Left cardiac atrium (tissue), 4 donors: ENCODE measurements at regions of chr1 and their contacts with region 1.

Region 1: DNA sequence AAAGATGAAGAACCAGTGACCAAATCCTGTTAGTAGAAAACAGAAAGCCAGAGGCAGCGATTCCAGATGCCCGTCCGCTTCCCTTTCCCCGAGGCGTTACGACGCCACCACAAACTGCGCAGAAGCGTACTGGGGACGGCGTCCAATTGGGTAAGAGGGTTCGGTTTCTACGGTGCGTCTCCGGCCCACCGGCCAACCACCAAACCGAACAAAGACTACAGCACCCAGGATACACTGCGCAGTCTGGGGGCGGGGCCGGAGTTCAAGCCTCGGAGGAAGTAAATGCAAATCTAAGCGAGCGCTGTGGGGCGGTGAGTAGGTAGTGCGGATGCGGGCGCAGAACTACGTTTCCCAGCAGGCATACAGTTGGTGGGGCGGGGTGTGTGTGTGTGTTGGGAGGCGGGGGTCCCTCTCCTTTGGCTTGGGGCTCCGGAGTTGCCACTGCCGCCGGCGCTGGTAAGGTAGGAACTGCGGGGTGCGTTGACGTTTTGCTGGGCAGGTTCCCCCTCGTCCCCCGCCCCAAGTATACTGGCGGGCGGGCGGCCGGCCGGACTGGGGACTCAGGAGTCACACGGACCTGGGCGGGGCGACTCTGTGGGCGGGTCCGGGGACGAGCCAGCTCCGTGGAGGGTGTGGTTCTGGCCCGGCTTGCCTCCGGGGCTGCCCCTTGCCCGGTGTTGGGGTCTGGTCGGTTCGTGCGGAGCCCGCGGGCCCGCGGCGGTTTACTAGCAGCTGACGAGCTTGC is at the starts of genes SWT1 and TRMT1L:
- DNase-seq: peak; percentile 100
- ATAC-seq: peak; percentile 95 to 98
- total RNA-seq, gene SWT1: 4.9 to 5.6 TPM
- total RNA-seq, gene TRMT1L: 16.6 to 23.9 TPM

Region 2: GRCh38 chr1:184805667-184806295 is 351.2 kb before region 1 on chr1:
- intact Hi-C with region 1: loop called in 1 of 2 experiments (anchors 10 kb)
- DNase-seq: peak; percentile 89
- ATAC-seq: peak; percentile 95 to 96

Region 3: DNA sequence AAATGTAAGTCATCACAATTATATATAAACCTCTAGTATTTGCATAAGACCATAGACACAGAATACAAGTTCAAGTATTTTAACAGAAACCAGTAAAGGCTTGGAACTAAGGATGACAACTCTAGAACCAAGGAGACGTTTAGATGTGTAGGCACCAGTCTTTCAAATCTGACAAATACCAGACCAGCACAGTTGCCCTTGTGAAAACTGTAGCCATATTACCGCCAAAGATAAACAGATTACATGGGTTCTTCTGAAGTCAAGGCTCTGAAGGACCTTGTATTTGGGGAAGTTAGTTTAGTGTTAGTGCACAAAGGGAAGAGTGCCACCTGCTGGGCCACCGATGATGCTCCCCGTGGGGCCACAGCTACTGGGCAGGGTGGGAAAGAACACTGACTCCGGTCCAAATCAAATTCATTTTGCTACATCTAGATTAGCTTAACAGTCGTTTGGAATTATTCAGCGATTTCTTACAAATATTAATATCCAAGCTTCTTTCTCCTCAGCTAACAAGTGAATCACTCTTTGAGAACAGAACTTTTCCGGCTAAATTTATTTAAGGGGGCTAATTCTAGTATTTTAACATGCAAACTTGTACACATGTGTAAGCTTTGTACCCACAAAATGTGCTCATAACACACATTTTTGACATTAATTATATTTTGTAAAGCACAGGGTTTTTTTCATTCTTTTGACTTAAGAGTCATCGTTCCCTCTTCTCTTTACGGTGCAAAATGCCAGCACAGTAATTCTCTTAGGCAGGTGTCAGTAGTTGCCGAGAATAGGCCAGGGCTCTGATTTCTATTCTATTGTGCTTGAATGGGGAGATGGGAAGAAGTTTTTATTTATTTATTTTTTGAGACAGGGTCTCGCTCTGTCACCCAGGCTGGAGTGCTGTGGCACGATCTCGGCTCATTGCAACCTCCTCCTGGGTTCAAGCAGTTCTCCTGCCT is 174.7 kb before region 1 on chr1:
- intact Hi-C with region 1: loop called in 1 of 2 experiments (anchors 10 kb)
- DNase-seq: peak; percentile 83
- ATAC-seq: peak; percentile 97 to 98